MCF 10A (cell line): ENCODE measurements at regions of chr6 and their contacts with region 1.

Region 1: DNA sequence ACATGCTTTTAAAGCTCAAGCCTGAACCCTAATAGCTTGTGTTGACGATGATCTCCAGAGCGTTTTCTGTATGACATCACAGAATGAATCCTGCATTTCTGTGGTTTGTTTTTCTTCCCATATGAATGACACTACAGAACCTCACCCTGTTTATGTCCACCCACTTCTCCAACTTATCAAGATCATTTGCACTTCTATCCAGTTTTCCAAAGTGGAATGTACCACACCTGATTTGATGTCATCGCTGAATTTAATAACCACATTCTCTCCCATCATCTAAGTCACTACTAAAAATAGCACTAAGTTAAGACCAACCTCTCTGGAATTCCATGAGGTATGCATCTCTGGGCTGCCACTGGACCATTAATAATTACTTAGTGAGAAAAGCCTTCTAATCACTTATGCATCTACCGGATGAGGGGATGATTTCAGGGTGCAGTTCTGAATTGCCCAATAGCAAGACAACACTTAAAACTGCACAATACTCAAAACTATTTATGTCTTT is 33.3 kb upstream of the CITED2 start:
- DNase-seq: peak; percentile 50
- H3K4me3 Mint-ChIP-seq: peak overlapping the region; percentile 30
- H3K27ac Mint-ChIP-seq: peak overlapping the region; percentile 94
- H3K4me1 Mint-ChIP-seq: peaks cover 33% of the 10 kb centered on the region
- H3K27me3 Mint-ChIP-seq: no peaks in the 10 kb centered on the region
- CTCF ChIP-seq: no peak

Region 2: GRCh38 chr6:139519571-139520031 is 111.8 kb after region 1 on chr6:
- CTCF ChIA-PET with region 1: no interaction called
- POLR2A ChIA-PET with region 1: interaction called, 4 read pairs
- intact Hi-C with region 1: loop called (anchors 5 kb)
- DNase-seq: no peak
- H3K4me3 Mint-ChIP-seq: no peak overlapping the region
- H3K27ac Mint-ChIP-seq: peak overlapping the region; percentile 46
- H3K4me1 Mint-ChIP-seq: peaks cover 29% of the 10 kb centered on the region
- H3K27me3 Mint-ChIP-seq: no peaks in the 10 kb centered on the region
- CTCF ChIP-seq: no peak

Region 3: DNA sequence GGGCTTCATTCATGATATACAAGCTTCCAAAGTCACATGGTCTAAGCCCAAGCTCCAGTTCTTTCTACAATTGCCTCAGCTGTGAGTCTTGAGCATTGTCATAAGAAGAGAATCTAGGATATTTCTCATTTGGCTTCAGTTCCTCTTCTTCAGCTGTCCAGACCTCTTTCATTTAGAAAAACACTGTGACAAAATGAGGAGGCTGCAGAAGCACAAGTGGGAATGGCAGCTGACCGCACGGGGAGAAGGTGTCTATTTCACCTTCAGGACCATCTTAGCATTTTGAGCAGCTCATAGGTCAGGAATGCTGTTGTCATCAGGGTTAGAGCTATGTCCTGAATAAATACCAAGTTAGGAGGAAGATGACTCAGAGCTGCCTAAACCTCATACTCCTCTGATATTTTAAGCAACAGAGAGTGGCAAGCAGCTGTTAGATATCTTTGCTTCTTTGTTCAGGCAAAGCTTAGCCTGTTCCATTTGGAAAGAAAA is 356.8 kb after region 1 on chr6:
- CTCF ChIA-PET with region 1: no interaction called
- POLR2A ChIA-PET with region 1: no interaction called
- intact Hi-C with region 1: loop called (anchors 10 kb)
- DNase-seq: peak; percentile 86
- H3K4me3 Mint-ChIP-seq: peak overlapping the region; percentile 14
- H3K27ac Mint-ChIP-seq: peak overlapping the region; percentile 88
- H3K4me1 Mint-ChIP-seq: peaks cover 37% of the 10 kb centered on the region
- H3K27me3 Mint-ChIP-seq: no peaks in the 10 kb centered on the region
- CTCF ChIP-seq: no peak